GM12878 (cell line): ENCODE measurements at regions of chr9 and their contacts with region 1.

Region 1: GRCh38 chr9:68895741-68896478 is 118.0 kb downstream of the PRKACG start:
- DNase-seq: peak; percentile 69
- ATAC-seq: peak; percentile 93
- H3K4me3 ChIP-seq: peak overlapping the region; percentile 33; the same call in 1 of the 2 replicates
- H3K27ac ChIP-seq: peak overlapping the region; percentile 81
- H3K4me1 ChIP-seq: peaks cover 32% of the 10 kb centered on the region
- H3K27me3 ChIP-seq: no peaks in the 10 kb centered on the region
- CTCF ChIP-seq: no peak
- EP300 ChIP-seq: no peak
- POLR2A ChIP-seq: no peak
- RAD21 ChIP-seq: peak; percentile 17; the same call in 1 of the 2 replicates

Region 2: GRCh38 chr9:68844631-68845612 is 51.0 kb before region 1 on chr9:
- CTCF ChIA-PET with region 1: no interaction called
- POLR2A ChIA-PET with region 1: interaction called, 3 read pairs
- RAD21 ChIA-PET with region 1: no interaction called
- SMC1A ChIA-PET with region 1: no interaction called
- in situ Hi-C with region 1: loop called (anchors 5 kb)
- intact Hi-C with region 1: no loop called
- DNase-seq: no peak
- ATAC-seq: peak; percentile 73
- H3K4me3 ChIP-seq: peak overlapping the region; percentile 21; the same call in 1 of the 2 replicates
- H3K27ac ChIP-seq: peak overlapping the region; percentile 32; the same call in 1 of the 2 replicates
- H3K4me1 ChIP-seq: peaks cover 19% of the 10 kb centered on the region
- H3K27me3 ChIP-seq: no peaks in the 10 kb centered on the region
- CTCF ChIP-seq: peak; percentile 52 to 63 (median 54)
- EP300 ChIP-seq: no peak
- POLR2A ChIP-seq: no peak
- RAD21 ChIP-seq: peak; percentile 69